ENCODE measurements at regions of chr14 and their contacts with region 1.

Region 1: GRCh38 chr14:75230140-75231045 is 48.2 kb upstream of the FOS start:
- DNase-seq: peak; percentile 64 to 87 (median 75)
- H3K4me3 ChIP-seq: no peak overlapping the region
- H3K4me3 Mint-ChIP-seq: peak overlapping the region in 7 of 8 donors; percentile 47 to 87 (median 76)
- H3K27ac ChIP-seq: peak overlapping the region; percentile 47
- H3K27ac Mint-ChIP-seq: peak overlapping the region; percentile 85 to 97 (median 94)
- H3K4me1 ChIP-seq: peaks cover 43% of the 10 kb centered on the region
- H3K4me1 Mint-ChIP-seq: peaks cover 36 to 63% (median 53%) of the 10 kb centered on the region in 4 donors
- H3K27me3 ChIP-seq: no peaks in the 10 kb centered on the region
- H3K27me3 Mint-ChIP-seq: no peaks in the 10 kb centered on the region

Region 2: DNA sequence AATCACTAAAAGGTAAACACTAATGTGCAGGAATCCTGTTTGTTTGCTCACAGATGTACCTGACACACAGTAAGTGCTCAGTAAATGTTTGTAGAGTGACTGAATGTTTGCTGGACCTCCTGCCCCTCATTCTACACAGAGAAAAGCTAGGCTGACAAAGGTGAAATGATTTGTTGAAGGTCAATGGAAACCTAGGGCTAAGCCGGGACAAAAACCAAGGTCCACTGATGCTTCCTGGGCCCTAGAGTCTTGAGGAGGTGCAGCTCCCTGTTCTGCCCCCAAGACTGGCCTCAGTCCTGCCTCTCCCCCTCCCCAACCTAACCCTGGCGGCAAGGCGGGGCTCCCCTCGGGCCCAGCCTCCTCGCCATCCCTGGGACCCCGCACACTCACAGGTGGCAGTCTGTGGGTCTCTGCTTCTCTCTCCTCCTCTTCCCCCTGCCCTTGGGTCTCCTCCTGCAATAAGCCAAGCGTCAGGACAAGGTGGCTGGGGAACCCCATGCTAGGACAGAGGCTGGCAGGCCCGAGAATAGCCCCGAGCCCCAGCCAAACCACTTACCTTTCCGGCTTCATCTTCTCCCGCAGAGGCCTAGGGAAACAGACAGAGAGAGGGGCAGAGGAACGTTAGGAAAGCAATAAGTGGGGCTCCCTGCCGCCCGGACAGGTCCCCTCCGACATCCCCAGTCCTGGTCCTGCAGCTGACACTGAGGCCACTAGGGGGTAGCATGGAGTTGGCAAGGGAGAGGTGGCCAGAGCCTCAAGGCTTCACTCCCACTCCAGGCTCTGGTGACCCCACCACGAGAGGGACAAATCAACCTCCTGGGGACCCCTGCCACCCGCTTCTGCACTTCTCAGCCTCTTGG is 284.3 kb before region 1 on chr14:
- CTCF ChIA-PET with region 1: no interaction called
- POLR2A ChIA-PET with region 1: no interaction called
- intact Hi-C with region 1: no loop called
- DNase-seq: peak; percentile 62 to 74 (median 63)
- H3K4me3 ChIP-seq: no peak overlapping the region
- H3K4me3 Mint-ChIP-seq: peak overlapping the region in 5 of 8 donors; percentile 22 to 81 (median 63)
- H3K27ac ChIP-seq: no peak overlapping the region
- H3K27ac Mint-ChIP-seq: peak overlapping the region; percentile 21 to 93 (median 70)
- H3K4me1 ChIP-seq: peaks cover 37% of the 10 kb centered on the region
- H3K4me1 Mint-ChIP-seq: peaks cover 13 to 32% (median 30%) of the 10 kb centered on the region in 4 donors
- H3K27me3 ChIP-seq: no peaks in the 10 kb centered on the region
- H3K27me3 Mint-ChIP-seq: peaks cover 0 to 2% of the 10 kb centered on the region in 2 donors

Region 3: GRCh38 chr14:75132382-75133086 is 97.9 kb before region 1 on chr14:
- CTCF ChIA-PET with region 1: interaction called, 7 read pairs
- POLR2A ChIA-PET with region 1: no interaction called
- intact Hi-C with region 1: loop called (anchors 2 kb)
- DNase-seq: peak; percentile 65 to 76 (median 74)
- H3K4me3 ChIP-seq: no peak overlapping the region
- H3K4me3 Mint-ChIP-seq: peak overlapping the region in 1 of 8 donors; percentile 5
- H3K27ac ChIP-seq: no peak overlapping the region
- H3K27ac Mint-ChIP-seq: peak overlapping the region; percentile 10 to 90 (median 72)
- H3K4me1 ChIP-seq: peaks cover 12% of the 10 kb centered on the region
- H3K4me1 Mint-ChIP-seq: peaks cover 13 to 18% (median 17%) of the 10 kb centered on the region in 4 donors
- H3K27me3 ChIP-seq: no peaks in the 10 kb centered on the region
- H3K27me3 Mint-ChIP-seq: no peaks in the 10 kb centered on the region

Region 4: DNA sequence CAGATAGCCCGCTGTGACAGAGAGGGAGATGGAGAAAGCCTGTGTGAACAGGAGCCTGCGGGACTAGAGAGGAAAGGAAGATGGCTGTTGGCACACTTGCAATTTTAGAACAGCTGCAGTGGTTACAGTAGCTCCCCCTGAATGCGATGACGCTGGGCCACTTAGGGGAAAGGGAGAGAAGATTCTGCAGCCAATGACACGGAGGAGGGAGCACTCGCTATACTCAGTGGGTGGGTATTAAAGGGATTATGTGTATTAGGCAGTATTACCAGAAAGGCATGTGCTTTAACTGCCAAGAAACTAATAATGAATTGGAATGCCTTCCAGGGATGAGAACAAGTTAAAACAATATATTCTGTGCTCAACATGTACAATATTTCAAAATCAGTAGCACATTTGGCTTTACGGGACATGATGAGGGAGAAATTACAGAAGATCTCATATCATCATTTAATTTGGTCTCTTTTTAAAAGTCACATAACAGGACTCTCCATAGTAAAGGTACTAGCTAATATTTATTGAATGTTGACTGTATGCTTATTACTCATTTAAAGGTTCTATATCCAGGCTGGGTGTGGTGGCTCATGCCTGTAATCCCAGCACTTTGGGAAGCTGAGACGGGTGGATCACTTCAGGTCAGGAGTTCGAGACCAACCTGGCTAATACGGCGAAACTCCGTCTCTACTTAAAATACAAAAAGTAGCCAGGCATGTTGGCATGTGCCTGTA is 12.3 kb after region 1 on chr14:
- CTCF ChIA-PET with region 1: interaction called, 11 read pairs
- POLR2A ChIA-PET with region 1: interaction called, 29 read pairs
- intact Hi-C with region 1: no loop called
- DNase-seq: no peak
- H3K4me3 ChIP-seq: no peak overlapping the region
- H3K4me3 Mint-ChIP-seq: no peak overlapping the region
- H3K27ac ChIP-seq: no peak overlapping the region
- H3K27ac Mint-ChIP-seq: peak overlapping the region in 1 of 7 donors; percentile 38
- H3K4me1 ChIP-seq: peaks cover 20% of the 10 kb centered on the region
- H3K4me1 Mint-ChIP-seq: peaks cover 12 to 24% (median 17%) of the 10 kb centered on the region in 4 donors
- H3K27me3 ChIP-seq: no peaks in the 10 kb centered on the region
- H3K27me3 Mint-ChIP-seq: no peaks in the 10 kb centered on the region

Region 5: DNA sequence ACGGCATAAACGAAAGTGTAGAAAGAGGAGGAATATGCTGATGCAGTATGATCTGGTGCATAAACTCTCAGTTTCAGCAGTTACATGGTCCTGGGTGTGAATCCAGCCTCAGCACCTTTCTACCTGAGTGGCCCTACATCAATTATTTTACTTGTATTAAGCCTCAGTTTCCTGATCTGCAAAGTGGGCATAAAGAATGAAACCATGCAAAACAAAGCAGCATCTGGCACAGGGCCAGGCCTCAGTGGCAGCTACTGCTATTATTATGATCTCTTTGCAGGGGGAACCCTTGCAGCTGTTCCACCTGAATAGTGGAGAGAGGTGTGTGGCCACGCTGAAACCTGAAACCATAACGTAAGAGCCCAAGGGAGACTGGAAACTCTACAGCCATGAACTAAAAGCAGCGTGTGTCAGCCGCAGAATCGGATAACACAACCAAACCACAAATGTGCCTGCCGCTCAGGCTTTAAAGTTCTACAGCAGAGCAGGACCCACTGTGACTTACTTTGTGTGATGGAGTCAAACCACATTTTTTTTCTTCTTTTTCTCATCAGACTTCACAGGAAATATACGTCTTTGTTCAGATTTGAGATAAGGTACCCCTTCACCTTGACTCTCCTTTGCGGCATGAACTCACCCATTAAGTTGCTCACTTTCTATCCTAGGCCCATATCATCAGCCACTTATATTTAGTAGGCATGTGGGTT is 19.0 kb after region 1 on chr14:
- CTCF ChIA-PET with region 1: interaction called, 11 read pairs
- POLR2A ChIA-PET with region 1: interaction called, 29 read pairs
- intact Hi-C with region 1: loop called (anchors 1 kb)
- DNase-seq: peak; percentile 90 to 96 (median 95)
- H3K4me3 ChIP-seq: peak overlapping the region in 1 of 2 donors; percentile 54
- H3K4me3 Mint-ChIP-seq: peak overlapping the region; percentile 63 to 85 (median 78)
- H3K27ac ChIP-seq: peak overlapping the region; percentile 80
- H3K27ac Mint-ChIP-seq: peak overlapping the region; percentile 92 to 99 (median 97)
- H3K4me1 ChIP-seq: peaks cover 58% of the 10 kb centered on the region
- H3K4me1 Mint-ChIP-seq: peaks cover 38 to 70% (median 56%) of the 10 kb centered on the region in 4 donors
- H3K27me3 ChIP-seq: no peaks in the 10 kb centered on the region
- H3K27me3 Mint-ChIP-seq: no peaks in the 10 kb centered on the region

Region 6: GRCh38 chr14:75258615-75259466 is 28.4 kb after region 1 on chr14:
- CTCF ChIA-PET with region 1: interaction called, 12 read pairs
- POLR2A ChIA-PET with region 1: interaction called, 24 read pairs
- intact Hi-C with region 1: loop called (anchors 1 kb)
- DNase-seq: peak; percentile 99 to 100 (median 100)
- H3K4me3 ChIP-seq: peak overlapping the region; percentile 52 to 54
- H3K4me3 Mint-ChIP-seq: peak overlapping the region; percentile 82 to 90 (median 88)
- H3K27ac ChIP-seq: peak overlapping the region; percentile 95
- H3K27ac Mint-ChIP-seq: peak overlapping the region; percentile 98 to 100 (median 100)
- H3K4me1 ChIP-seq: peaks cover 23% of the 10 kb centered on the region
- H3K4me1 Mint-ChIP-seq: peaks cover 21 to 44% (median 33%) of the 10 kb centered on the region in 4 donors
- H3K27me3 ChIP-seq: no peaks in the 10 kb centered on the region
- H3K27me3 Mint-ChIP-seq: no peaks in the 10 kb centered on the region

Region 7: DNA sequence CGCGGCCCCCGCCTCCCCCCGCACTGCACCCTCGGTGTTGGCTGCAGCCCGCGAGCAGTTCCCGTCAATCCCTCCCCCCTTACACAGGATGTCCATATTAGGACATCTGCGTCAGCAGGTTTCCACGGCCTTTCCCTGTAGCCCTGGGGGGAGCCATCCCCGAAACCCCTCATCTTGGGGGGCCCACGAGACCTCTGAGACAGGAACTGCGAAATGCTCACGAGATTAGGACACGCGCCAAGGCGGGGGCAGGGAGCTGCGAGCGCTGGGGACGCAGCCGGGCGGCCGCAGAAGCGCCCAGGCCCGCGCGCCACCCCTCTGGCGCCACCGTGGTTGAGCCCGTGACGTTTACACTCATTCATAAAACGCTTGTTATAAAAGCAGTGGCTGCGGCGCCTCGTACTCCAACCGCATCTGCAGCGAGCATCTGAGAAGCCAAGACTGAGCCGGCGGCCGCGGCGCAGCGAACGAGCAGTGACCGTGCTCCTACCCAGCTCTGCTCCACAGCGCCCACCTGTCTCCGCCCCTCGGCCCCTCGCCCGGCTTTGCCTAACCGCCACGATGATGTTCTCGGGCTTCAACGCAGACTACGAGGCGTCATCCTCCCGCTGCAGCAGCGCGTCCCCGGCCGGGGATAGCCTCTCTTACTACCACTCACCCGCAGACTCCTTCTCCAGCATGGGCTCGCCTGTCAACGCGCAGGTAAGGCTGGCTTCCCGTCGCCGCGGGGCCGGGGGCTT is 48.2 kb after region 1 on chr14 and contains the start of gene FOS:
- CTCF ChIA-PET with region 1: interaction called, 7 read pairs
- POLR2A ChIA-PET with region 1: interaction called, 20 read pairs
- intact Hi-C with region 1: loop called (anchors 1 kb)
- DNase-seq: peak; percentile 97 to 99 (median 98)
- H3K4me3 ChIP-seq: peak within 1 kb of the TSS; percentile 89 to 95
- H3K4me3 Mint-ChIP-seq: peak within 1 kb of the TSS; percentile 90 to 98 (median 94)
- H3K27ac ChIP-seq: peak within 1 kb of the TSS; percentile 75
- H3K27ac Mint-ChIP-seq: peak within 1 kb of the TSS; percentile 98 to 100 (median 99)
- H3K4me1 ChIP-seq: peaks cover 56% of the 10 kb centered on the region
- H3K4me1 Mint-ChIP-seq: peaks cover 41 to 88% (median 53%) of the 10 kb centered on the region in 4 donors
- H3K27me3 ChIP-seq: peaks cover 6% of the 10 kb centered on the region
- H3K27me3 Mint-ChIP-seq: peaks cover 0 to 24% of the 10 kb centered on the region in 2 donors
- total RNA-seq, gene FOS: 4.1 to 4.3 TPM

Region 8: DNA sequence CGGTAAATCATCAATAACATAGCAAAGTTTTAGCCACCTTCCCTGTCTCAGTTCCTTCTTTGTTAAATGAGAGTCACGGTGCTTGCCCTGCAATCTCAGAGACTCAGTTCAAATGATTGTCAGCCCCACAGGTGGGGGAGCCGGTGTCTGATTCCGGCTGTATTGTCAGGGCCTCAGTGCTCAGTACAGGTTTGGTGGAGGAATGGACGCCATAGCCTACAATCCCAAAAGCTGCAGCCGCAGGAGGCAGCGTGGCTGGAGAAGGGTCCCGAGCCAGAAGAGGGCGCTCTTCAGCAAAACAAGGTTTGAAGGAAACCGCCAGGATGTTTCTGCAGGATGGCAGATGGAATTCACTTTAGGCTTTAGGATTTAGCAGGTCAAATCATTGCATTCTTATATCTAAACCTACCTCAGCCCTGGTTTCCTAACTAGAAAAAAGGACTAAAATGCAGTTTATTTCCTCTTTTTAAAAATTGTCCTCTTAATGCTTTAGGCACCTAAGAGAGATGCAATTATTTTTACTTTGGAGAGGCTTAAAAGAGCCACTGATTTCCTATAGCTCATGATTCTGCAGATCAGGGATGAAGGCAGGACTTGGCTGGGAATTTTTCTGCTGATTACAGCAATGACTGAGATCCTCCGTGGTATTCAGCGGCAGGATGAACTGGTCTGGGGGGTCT is 77.4 kb after region 1 on chr14:
- CTCF ChIA-PET with region 1: interaction called, 47 read pairs
- POLR2A ChIA-PET with region 1: no interaction called
- intact Hi-C with region 1: no loop called
- DNase-seq: peak; percentile 56 to 68 (median 63)
- H3K4me3 ChIP-seq: no peak overlapping the region
- H3K4me3 Mint-ChIP-seq: peak overlapping the region in 1 of 8 donors; percentile 26
- H3K27ac ChIP-seq: no peak overlapping the region
- H3K27ac Mint-ChIP-seq: no peak overlapping the region
- H3K4me1 ChIP-seq: peaks cover 6% of the 10 kb centered on the region
- H3K4me1 Mint-ChIP-seq: peaks cover 4 to 19% (median 8%) of the 10 kb centered on the region in 4 donors
- H3K27me3 ChIP-seq: no peaks in the 10 kb centered on the region
- H3K27me3 Mint-ChIP-seq: peaks cover 1 to 3% of the 10 kb centered on the region in 2 donors

Measured in CD4-positive, alpha-beta memory T cell (primary cell).